ENCODE measurements at regions of chr6 and their contacts with region 1.

Region 1: DNA sequence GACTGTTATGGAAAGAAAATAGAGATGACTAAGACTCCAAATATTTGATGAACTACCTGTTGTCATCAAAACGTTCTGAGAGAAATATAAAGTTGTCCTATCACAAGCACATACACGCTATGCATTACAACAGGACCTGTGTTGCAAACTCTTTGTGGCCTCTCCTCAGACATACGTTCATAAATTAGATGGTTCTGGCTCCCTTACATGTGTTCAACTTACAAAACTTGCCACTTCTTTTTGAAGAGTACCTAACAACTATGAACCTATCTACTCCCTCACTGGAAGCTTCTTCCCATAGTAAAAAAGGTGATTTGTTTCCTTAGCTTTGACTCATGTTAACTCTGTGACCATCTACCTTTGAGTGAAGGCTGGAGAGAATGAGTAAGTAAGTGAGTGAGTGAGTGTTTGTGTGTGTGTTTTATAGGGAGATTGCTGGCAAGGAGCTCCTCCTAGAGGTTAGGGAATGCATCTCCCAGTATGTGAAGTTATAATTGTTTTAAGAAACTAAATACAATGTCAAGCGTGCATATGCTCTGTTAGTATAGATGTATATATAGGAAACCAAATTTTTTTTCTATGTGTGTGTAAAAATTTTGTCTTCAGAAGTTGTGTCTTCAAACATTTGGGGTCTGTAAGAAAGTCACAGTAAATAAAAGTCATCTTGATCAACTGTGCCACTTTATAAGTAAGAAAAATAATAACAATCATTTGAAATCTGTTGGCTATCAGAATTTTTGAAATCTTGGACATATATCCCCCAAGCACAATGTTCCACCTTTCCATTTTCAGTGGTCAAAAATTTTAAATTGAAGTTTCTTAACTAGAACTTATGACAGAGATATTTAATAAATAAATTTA is 1211.1 kb upstream of the GJE1 start:
- DNase-seq: peak; percentile 85
- H3K4me3 Mint-ChIP-seq: no peak overlapping the region
- H3K27ac Mint-ChIP-seq: peak overlapping the region; percentile 66
- H3K4me1 Mint-ChIP-seq: peaks cover 6% of the 10 kb centered on the region
- H3K27me3 Mint-ChIP-seq: no peaks in the 10 kb centered on the region
- CTCF ChIP-seq: peak; percentile 82

Region 2: DNA sequence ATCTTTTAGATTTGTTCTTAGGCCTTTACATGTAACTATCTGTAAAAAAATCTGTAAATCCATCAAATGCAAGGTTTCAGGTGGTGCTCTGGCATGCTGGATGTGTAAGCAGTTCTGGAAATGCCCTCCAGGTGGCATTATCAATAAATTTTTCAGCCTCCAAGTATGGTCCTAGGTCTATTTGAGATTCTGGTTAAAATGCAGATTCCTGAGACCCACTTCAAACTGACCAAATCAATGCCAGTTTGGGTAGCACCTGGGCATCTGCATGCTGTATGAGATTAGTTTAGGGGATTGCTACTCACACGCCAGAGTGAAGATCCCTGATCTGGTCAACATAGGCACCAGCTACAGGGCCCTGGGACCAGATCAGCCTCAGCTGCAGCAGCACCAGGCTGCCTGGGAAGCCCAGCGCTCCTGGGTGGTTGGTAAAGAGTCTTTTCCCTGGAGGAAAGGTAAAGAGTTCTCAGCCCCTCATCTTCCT is 1039.8 kb before region 1 on chr6:
- CTCF ChIA-PET with region 1: interaction called, 3 read pairs
- POLR2A ChIA-PET with region 1: no interaction called
- intact Hi-C with region 1: loop called (anchors 2 kb)
- DNase-seq: peak; percentile 51
- H3K4me3 Mint-ChIP-seq: no peak overlapping the region
- H3K27ac Mint-ChIP-seq: no peak overlapping the region
- H3K4me1 Mint-ChIP-seq: peaks cover 5% of the 10 kb centered on the region
- H3K27me3 Mint-ChIP-seq: no peaks in the 10 kb centered on the region
- CTCF ChIP-seq: peak; percentile 46

Region 3: GRCh38 chr6:140062043-140063020 is 859.3 kb before region 1 on chr6:
- CTCF ChIA-PET with region 1: no interaction called
- POLR2A ChIA-PET with region 1: no interaction called
- intact Hi-C with region 1: loop called (anchors 5 kb)
- DNase-seq: peak; percentile 89
- H3K4me3 Mint-ChIP-seq: peak overlapping the region; percentile 59
- H3K27ac Mint-ChIP-seq: peak overlapping the region; percentile 85
- H3K4me1 Mint-ChIP-seq: peaks cover 41% of the 10 kb centered on the region
- H3K27me3 Mint-ChIP-seq: no peaks in the 10 kb centered on the region
- CTCF ChIP-seq: no peak

Region 4: GRCh38 chr6:140441256-140441655 is 480.3 kb before region 1 on chr6:
- CTCF ChIA-PET with region 1: interaction called, 3 read pairs
- POLR2A ChIA-PET with region 1: no interaction called
- intact Hi-C with region 1: loop called (anchors 1 kb)
- DNase-seq: peak; percentile 40
- H3K4me3 Mint-ChIP-seq: no peak overlapping the region
- H3K27ac Mint-ChIP-seq: no peak overlapping the region
- H3K4me1 Mint-ChIP-seq: peaks cover 19% of the 10 kb centered on the region
- H3K27me3 Mint-ChIP-seq: no peaks in the 10 kb centered on the region
- CTCF ChIP-seq: peak; percentile 45

Region 5: DNA sequence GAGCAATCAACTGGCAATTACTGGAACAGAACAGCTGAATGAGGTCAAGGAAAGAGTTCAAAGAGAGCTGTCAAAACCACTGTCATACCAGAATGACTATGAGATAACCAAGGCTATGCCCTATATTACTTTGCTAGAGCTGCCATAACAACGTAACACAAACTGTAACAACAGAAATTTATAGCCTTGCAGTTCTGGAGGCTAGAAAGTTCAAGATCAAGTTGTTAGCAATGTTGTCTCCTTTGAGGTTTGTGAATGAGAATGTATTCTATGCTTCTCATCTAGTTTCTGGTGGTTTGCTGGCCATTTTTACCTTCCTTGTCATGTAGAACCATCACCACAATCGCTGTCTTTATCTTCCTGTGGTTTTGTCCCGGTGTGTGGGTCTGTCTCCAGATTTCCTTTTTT is 111.9 kb before region 1 on chr6:
- CTCF ChIA-PET with region 1: no interaction called
- POLR2A ChIA-PET with region 1: no interaction called
- intact Hi-C with region 1: no loop called
- DNase-seq: no peak
- H3K4me3 Mint-ChIP-seq: no peak overlapping the region
- H3K27ac Mint-ChIP-seq: no peak overlapping the region
- H3K4me1 Mint-ChIP-seq: no peaks in the 10 kb centered on the region
- H3K27me3 Mint-ChIP-seq: no peaks in the 10 kb centered on the region
- CTCF ChIP-seq: no peak

Region 6: GRCh38 chr6:140897804-140898573 is 23.6 kb before region 1 on chr6:
- CTCF ChIA-PET with region 1: no interaction called
- POLR2A ChIA-PET with region 1: no interaction called
- intact Hi-C with region 1: no loop called
- DNase-seq: no peak
- H3K4me3 Mint-ChIP-seq: no peak overlapping the region
- H3K27ac Mint-ChIP-seq: no peak overlapping the region
- H3K4me1 Mint-ChIP-seq: no peaks in the 10 kb centered on the region
- H3K27me3 Mint-ChIP-seq: no peaks in the 10 kb centered on the region
- CTCF ChIP-seq: no peak